HepG2 (cell line): ENCODE measurements at regions of chr3 and their contacts with region 1.

Region 1: DNA sequence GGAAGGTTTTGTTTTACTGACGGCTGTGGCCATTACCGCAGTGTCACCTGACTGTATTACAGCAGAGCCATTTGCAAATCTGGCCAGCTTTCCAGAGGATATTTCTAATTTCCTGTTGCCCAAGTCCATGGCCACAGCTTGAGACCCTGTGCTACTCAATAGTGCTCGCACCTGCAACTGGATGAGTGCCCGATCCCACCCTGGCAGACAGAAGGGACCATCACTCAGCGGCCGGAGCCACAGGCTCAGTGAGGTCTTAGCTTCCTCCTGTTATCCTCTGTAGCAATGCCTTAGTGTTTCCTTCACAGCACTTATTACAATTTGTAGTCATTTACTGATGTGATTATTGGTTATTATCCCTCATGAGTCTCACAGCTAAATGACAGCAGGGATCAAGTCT is 184.8 kb downstream of the LRRN1 start:
- DNase-seq: no peak
- ATAC-seq: no peak
- H3K4me3 ChIP-seq: no peak overlapping the region
- H3K27ac ChIP-seq: no peak overlapping the region
- H3K4me1 ChIP-seq: no peaks in the 10 kb centered on the region
- H3K27me3 ChIP-seq: no peaks in the 10 kb centered on the region
- CTCF ChIP-seq: no peak
- EP300 ChIP-seq: no peak
- POLR2A ChIP-seq: no peak
- RAD21 ChIP-seq: no peak

Region 2: GRCh38 chr3:3648988-3649679 is 334.9 kb before region 1 on chr3:
- CTCF ChIA-PET with region 1: no interaction called
- POLR2A ChIA-PET with region 1: no interaction called
- in situ Hi-C with region 1: no loop called
- intact Hi-C with region 1: no loop called
- DNase-seq: no peak
- ATAC-seq: no peak
- H3K4me3 ChIP-seq: no peak overlapping the region
- H3K27ac ChIP-seq: no peak overlapping the region
- H3K4me1 ChIP-seq: no peaks in the 10 kb centered on the region
- H3K27me3 ChIP-seq: no peaks in the 10 kb centered on the region
- CTCF ChIP-seq: no peak
- EP300 ChIP-seq: no peak
- POLR2A ChIP-seq: no peak
- RAD21 ChIP-seq: no peak

Region 3: GRCh38 chr3:3951071-3951470 is 33.0 kb before region 1 on chr3:
- CTCF ChIA-PET with region 1: no interaction called
- POLR2A ChIA-PET with region 1: no interaction called
- in situ Hi-C with region 1: no loop called
- intact Hi-C with region 1: loop called (anchors 2 kb)
- DNase-seq: no peak
- ATAC-seq: no peak
- H3K4me3 ChIP-seq: no peak overlapping the region
- H3K27ac ChIP-seq: no peak overlapping the region
- H3K4me1 ChIP-seq: 0 out of 2 replicates have a peak, but pooled peaks cover 5% of the 10 kb centered on the region
- H3K27me3 ChIP-seq: no peaks in the 10 kb centered on the region
- CTCF ChIP-seq: no peak
- EP300 ChIP-seq: no peak
- POLR2A ChIP-seq: no peak
- RAD21 ChIP-seq: no peak

Region 4: GRCh38 chr3:4107430-4107829 is 123.4 kb after region 1 on chr3:
- CTCF ChIA-PET with region 1: no interaction called
- POLR2A ChIA-PET with region 1: no interaction called
- in situ Hi-C with region 1: no loop called
- intact Hi-C with region 1: no loop called
- DNase-seq: no peak
- ATAC-seq: peak; percentile 59
- H3K4me3 ChIP-seq: no peak overlapping the region
- H3K27ac ChIP-seq: no peak overlapping the region
- H3K4me1 ChIP-seq: no peaks in the 10 kb centered on the region
- H3K27me3 ChIP-seq: no peaks in the 10 kb centered on the region
- CTCF ChIP-seq: no peak
- EP300 ChIP-seq: no peak
- POLR2A ChIP-seq: no peak
- RAD21 ChIP-seq: no peak